ENCODE measurements at regions of chr3 and their contacts with region 1.

Region 1: DNA sequence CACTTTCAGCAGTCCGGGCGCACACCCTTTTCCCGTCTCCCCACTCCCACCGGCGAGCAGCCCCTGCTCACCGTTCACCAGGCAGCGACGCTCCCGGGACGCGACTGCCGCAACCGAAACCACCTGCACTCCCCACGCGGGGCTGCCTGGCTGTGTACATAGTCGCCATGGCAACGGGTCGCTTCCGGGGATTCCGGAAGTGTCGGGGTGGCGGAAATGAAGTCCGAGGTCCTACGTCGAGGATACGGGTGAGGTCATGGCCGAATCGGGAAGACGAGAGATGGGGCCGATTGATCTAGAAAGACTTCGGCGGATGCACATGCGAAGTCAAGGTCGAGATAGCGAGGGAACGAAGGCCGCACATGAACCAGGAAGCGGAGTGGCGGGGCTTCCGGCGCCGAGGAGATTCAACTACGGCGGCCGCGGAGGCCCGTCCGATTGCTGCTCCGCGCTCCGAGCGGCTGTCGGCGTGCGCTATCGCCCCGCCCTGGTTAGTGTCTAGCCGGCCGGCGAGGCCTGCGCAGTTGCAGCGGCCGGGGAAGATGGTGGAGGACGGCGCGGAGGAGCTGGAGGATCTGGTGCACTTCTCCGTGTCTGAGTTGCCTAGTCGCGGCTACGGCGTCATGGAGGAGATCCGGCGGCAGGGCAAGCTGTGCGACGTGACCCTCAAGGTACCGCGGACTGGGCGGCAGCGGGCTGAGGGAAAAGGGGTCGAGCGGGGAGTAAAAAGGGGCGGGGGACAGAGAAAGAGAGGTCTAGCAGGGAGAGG is at the starts of genes KIF9 and KLHL18:
- DNase-seq: peak; percentile 94
- H3K4me3 ChIP-seq: peak within 1 kb of the TSS; percentile 70 to 78
- H3K27ac ChIP-seq: peak within 1 kb of the TSS; percentile 96 to 99
- H3K4me1 ChIP-seq: peaks cover 0 to 9% of the 10 kb centered on the region in 2 experiments; a peak in 1 of 4 replicates
- H3K27me3 ChIP-seq: no peaks in the 10 kb centered on the region
- CTCF ChIP-seq: no peak
- EP300 ChIP-seq: no peak
- RAD21 ChIP-seq: no peak
- polyA plus RNA-seq, gene KIF9: 23.9 and 31.8 TPM in 2 replicates
- polyA plus RNA-seq, gene KLHL18: 47.0 and 55.2 TPM in 2 replicates

Region 2: DNA sequence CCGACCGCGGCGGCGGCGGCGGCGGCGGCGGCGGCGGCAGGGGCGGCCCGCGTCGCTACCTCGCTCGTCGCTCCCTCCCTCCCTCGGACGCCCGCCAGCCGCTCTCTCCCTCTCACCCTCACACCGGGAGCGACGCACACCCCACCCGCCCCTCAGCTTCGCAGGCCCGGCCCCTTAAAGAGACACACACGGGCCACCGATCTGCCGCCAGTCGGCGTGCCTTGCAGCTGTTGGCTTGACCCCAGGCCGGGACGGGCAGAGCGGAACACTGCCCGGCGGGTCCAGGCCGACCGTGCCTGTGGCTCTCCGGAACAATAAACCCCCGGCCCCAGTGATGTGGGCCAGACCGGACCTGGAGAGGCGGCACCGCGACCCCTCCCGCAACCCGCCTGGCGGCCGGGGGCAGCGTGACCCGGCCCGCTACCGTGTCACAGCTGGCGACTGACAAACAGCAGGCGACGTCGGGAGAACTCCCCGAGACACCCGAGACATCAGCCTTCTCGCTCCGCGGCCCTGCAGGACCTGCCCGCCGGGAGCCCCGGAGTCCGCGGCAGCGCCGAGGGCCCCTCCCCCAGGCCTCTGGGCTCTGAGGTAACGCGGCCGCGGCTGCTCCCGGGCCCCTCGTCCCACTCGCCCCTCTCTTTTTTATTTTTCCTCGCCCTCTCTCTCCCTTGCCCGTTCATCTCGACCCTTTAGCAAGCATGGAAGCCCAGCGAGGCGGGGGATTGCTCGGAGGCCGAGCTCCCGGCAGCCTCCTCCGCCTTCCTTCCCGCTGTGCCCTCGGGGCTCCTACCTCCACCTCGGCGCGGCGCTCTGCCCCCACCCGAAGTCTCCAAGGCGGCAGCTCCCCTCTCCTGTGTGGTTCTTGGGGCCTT is 118.4 kb before region 1 on chr3 and contains the start of gene SETD2:
- CTCF ChIA-PET with region 1: interaction called, 10 read pairs
- POLR2A ChIA-PET with region 1: interaction called, 3 read pairs
- DNase-seq: peak; percentile 97
- H3K4me3 ChIP-seq: peak within 1 kb of the TSS; percentile 84 to 91
- H3K27ac ChIP-seq: peak within 1 kb of the TSS; percentile 80 to 92
- H3K4me1 ChIP-seq: peaks cover 0 to 16% of the 10 kb centered on the region in 2 experiments; a peak in 2 of 4 replicates
- H3K27me3 ChIP-seq: no peaks in the 10 kb centered on the region
- CTCF ChIP-seq: peak; percentile 30
- EP300 ChIP-seq: no peak; a peak in 1 of 4 replicates
- RAD21 ChIP-seq: peak; percentile 37
- polyA plus RNA-seq, gene SETD2: 12.1 and 15.3 TPM in 2 replicates

Region 3: GRCh38 chr3:47455806-47456452 is 173.3 kb after region 1 on chr3:
- CTCF ChIA-PET with region 1: no interaction called
- POLR2A ChIA-PET with region 1: no interaction called
- DNase-seq: no peak
- H3K4me3 ChIP-seq: no peak overlapping the region
- H3K27ac ChIP-seq: no peak overlapping the region
- H3K4me1 ChIP-seq: no peaks in the 10 kb centered on the region
- H3K27me3 ChIP-seq: no peaks in the 10 kb centered on the region
- CTCF ChIP-seq: no peak
- EP300 ChIP-seq: no peak
- RAD21 ChIP-seq: no peak